Activated B cell treated with CpG ODN at 0.5 μM for 24 hours (primary cell): ENCODE measurements at regions of chr12 and their contacts with region 1.

Region 1: GRCh38 chr12:25052196-25052913 is 103.5 kb upstream of the BCAT1 start:
- DNase-seq: peak; percentile 68
- ATAC-seq: peak; percentile 87
- H3K4me3 Mint-ChIP-seq: peak overlapping the region; percentile 95
- H3K27ac Mint-ChIP-seq: peak overlapping the region; percentile 96
- H3K4me1 Mint-ChIP-seq: peaks cover 48% of the 10 kb centered on the region
- H3K27me3 Mint-ChIP-seq: no peaks in the 10 kb centered on the region
- CTCF ChIP-seq: no peak

Region 2: GRCh38 chr12:24798335-24798734 is 254.0 kb before region 1 on chr12:
- CTCF ChIA-PET with region 1: no interaction called
- POLR2A ChIA-PET with region 1: no interaction called
- intact Hi-C with region 1: loop called (anchors 5 kb)
- DNase-seq: no peak
- ATAC-seq: peak; percentile 86
- H3K4me3 Mint-ChIP-seq: peak overlapping the region; percentile 5
- H3K27ac Mint-ChIP-seq: peak overlapping the region; percentile 77
- H3K4me1 Mint-ChIP-seq: peaks cover 44% of the 10 kb centered on the region
- H3K27me3 Mint-ChIP-seq: no peaks in the 10 kb centered on the region
- CTCF ChIP-seq: no peak

Region 3: DNA sequence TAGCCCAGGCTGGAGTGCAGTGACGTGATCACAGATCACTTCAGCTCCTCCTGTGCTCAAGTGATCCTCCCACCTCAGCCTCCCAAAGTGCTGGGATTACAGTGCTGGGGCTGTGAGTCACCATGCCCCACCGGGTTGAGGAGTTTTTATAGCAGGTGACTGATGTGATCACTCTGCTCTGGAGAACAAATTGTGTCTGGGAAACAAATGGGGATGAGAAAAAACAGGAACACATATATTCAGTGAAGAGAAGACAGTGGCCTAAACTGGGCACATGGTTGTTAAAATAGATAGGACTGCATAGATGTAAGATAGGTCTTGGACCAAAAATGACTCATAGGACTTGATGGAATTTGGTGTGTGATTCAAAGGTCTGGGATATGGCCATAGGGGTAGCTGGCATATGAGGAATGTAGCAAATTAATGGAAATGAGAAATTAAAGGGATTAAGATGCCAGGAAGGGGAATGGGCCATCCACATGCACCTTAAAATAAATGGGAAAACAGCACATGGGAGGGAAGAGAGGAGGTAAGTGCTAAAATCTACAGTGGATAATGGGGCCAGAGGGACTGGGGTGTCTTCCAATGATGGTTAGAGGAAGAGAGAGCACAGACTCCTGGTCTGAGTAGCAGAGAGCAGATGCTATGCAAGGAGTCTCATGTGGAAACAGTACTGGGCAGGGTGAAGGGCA is 114.7 kb before region 1 on chr12:
- CTCF ChIA-PET with region 1: no interaction called
- POLR2A ChIA-PET with region 1: no interaction called
- intact Hi-C with region 1: no loop called
- DNase-seq: no peak
- ATAC-seq: no peak
- H3K4me3 Mint-ChIP-seq: no peak overlapping the region
- H3K27ac Mint-ChIP-seq: no peak overlapping the region
- H3K4me1 Mint-ChIP-seq: peaks cover 1% of the 10 kb centered on the region
- H3K27me3 Mint-ChIP-seq: no peaks in the 10 kb centered on the region
- CTCF ChIP-seq: no peak

Region 4: GRCh38 chr12:24960222-24960855 is 92.0 kb before region 1 on chr12:
- CTCF ChIA-PET with region 1: no interaction called
- POLR2A ChIA-PET with region 1: no interaction called
- intact Hi-C with region 1: no loop called
- DNase-seq: no peak
- ATAC-seq: peak; percentile 79
- H3K4me3 Mint-ChIP-seq: no peak overlapping the region
- H3K27ac Mint-ChIP-seq: no peak overlapping the region
- H3K4me1 Mint-ChIP-seq: peaks cover 14% of the 10 kb centered on the region
- H3K27me3 Mint-ChIP-seq: no peaks in the 10 kb centered on the region
- CTCF ChIP-seq: no peak

Region 5: GRCh38 chr12:24991209-24992049 is 60.9 kb before region 1 on chr12:
- CTCF ChIA-PET with region 1: interaction called, 20 read pairs
- POLR2A ChIA-PET with region 1: interaction called, 486 read pairs
- intact Hi-C with region 1: no loop called
- DNase-seq: no peak
- ATAC-seq: peak; percentile 65
- H3K4me3 Mint-ChIP-seq: no peak overlapping the region
- H3K27ac Mint-ChIP-seq: no peak overlapping the region
- H3K4me1 Mint-ChIP-seq: peaks cover 46% of the 10 kb centered on the region
- H3K27me3 Mint-ChIP-seq: no peaks in the 10 kb centered on the region
- CTCF ChIP-seq: no peak

Region 6: GRCh38 chr12:25020621-25021243 is 31.6 kb before region 1 on chr12:
- CTCF ChIA-PET with region 1: interaction called, 15 read pairs
- POLR2A ChIA-PET with region 1: interaction called, 184 read pairs
- intact Hi-C with region 1: loop called (anchors 1 kb)
- DNase-seq: no peak
- ATAC-seq: peak; percentile 89
- H3K4me3 Mint-ChIP-seq: peak overlapping the region; percentile 60
- H3K27ac Mint-ChIP-seq: peak overlapping the region; percentile 81
- H3K4me1 Mint-ChIP-seq: peaks cover 68% of the 10 kb centered on the region
- H3K27me3 Mint-ChIP-seq: no peaks in the 10 kb centered on the region
- CTCF ChIP-seq: no peak

Region 7: GRCh38 chr12:25074954-25075353 is 22.6 kb after region 1 on chr12:
- CTCF ChIA-PET with region 1: no interaction called
- POLR2A ChIA-PET with region 1: interaction called, 61 read pairs
- intact Hi-C with region 1: loop called (anchors 1 kb)
- DNase-seq: no peak
- ATAC-seq: peak; percentile 40
- H3K4me3 Mint-ChIP-seq: peak overlapping the region; percentile 22
- H3K27ac Mint-ChIP-seq: peak overlapping the region; percentile 61
- H3K4me1 Mint-ChIP-seq: peaks cover 62% of the 10 kb centered on the region
- H3K27me3 Mint-ChIP-seq: no peaks in the 10 kb centered on the region
- CTCF ChIP-seq: no peak

Region 8: DNA sequence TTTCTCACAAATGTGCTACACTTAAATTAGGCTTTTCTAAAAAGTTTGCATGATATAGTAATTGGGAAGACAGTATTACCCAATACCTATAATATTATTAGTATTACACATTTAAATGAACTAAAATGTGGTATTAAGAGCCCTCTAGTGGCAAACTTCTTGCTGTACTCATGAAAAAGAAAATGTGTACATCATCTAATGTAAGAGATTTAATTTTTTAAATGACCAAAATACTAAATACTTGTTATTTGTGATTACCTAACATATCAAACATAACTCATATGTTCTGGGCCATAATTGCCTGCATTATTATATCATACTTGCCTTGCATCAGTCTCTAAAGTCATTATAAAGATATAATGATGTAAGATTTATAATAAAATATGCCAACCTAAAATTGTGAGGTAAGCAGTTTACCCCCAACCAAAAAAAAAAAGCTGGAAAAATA is 78.4 kb after region 1 on chr12:
- CTCF ChIA-PET with region 1: no interaction called
- POLR2A ChIA-PET with region 1: interaction called, 6 read pairs
- intact Hi-C with region 1: loop called (anchors 1 kb)
- DNase-seq: no peak
- ATAC-seq: peak; percentile 54
- H3K4me3 Mint-ChIP-seq: no peak overlapping the region
- H3K27ac Mint-ChIP-seq: no peak overlapping the region
- H3K4me1 Mint-ChIP-seq: peaks cover 7% of the 10 kb centered on the region
- H3K27me3 Mint-ChIP-seq: no peaks in the 10 kb centered on the region
- CTCF ChIP-seq: no peak

Region 9: GRCh38 chr12:25250744-25251730 is 198.7 kb after region 1 on chr12 and contains the start of gene KRAS:
- CTCF ChIA-PET with region 1: no interaction called
- POLR2A ChIA-PET with region 1: interaction called, 9 read pairs
- intact Hi-C with region 1: loop called (anchors 2 kb)
- DNase-seq: peak; percentile 88
- ATAC-seq: peak; percentile 85
- H3K4me3 Mint-ChIP-seq: peak within 1 kb of the TSS; percentile 95
- H3K27ac Mint-ChIP-seq: peak within 1 kb of the TSS; percentile 95
- H3K4me1 Mint-ChIP-seq: peaks cover 48% of the 10 kb centered on the region
- H3K27me3 Mint-ChIP-seq: no peaks in the 10 kb centered on the region
- CTCF ChIP-seq: no peak
- total RNA-seq, gene KRAS: 43.3 and 45.8 TPM in 2 replicates